Activated CD4-positive, alpha-beta T cell treated with anti-CD3 and anti-CD28 coated beads, Interleukin-2, amount 10 ng/mL, durations not matched to agents 24 days and 14 days (primary cell): ENCODE measurements at regions of chr16 and their contacts with region 1.

Region 1: GRCh38 chr16:53503270-53503923 is 388 bp upstream of the AKTIP start:
- DNase-seq: peak; percentile 100
- H3K4me3 Mint-ChIP-seq: peak overlapping the region; percentile 94
- H3K27ac Mint-ChIP-seq: peak overlapping the region; percentile 94
- H3K4me1 Mint-ChIP-seq: peaks cover 39% of the 10 kb centered on the region
- H3K27me3 Mint-ChIP-seq: no peaks in the 10 kb centered on the region

Region 2: GRCh38 chr16:53130159-53131049 is 373.0 kb before region 1 on chr16:
- intact Hi-C with region 1: loop called (anchors 1 kb)
- DNase-seq: peak; percentile 98
- H3K4me3 Mint-ChIP-seq: peak overlapping the region; percentile 86
- H3K27ac Mint-ChIP-seq: peak overlapping the region; percentile 77
- H3K4me1 Mint-ChIP-seq: peaks cover 8% of the 10 kb centered on the region
- H3K27me3 Mint-ChIP-seq: no peaks in the 10 kb centered on the region

Region 3: DNA sequence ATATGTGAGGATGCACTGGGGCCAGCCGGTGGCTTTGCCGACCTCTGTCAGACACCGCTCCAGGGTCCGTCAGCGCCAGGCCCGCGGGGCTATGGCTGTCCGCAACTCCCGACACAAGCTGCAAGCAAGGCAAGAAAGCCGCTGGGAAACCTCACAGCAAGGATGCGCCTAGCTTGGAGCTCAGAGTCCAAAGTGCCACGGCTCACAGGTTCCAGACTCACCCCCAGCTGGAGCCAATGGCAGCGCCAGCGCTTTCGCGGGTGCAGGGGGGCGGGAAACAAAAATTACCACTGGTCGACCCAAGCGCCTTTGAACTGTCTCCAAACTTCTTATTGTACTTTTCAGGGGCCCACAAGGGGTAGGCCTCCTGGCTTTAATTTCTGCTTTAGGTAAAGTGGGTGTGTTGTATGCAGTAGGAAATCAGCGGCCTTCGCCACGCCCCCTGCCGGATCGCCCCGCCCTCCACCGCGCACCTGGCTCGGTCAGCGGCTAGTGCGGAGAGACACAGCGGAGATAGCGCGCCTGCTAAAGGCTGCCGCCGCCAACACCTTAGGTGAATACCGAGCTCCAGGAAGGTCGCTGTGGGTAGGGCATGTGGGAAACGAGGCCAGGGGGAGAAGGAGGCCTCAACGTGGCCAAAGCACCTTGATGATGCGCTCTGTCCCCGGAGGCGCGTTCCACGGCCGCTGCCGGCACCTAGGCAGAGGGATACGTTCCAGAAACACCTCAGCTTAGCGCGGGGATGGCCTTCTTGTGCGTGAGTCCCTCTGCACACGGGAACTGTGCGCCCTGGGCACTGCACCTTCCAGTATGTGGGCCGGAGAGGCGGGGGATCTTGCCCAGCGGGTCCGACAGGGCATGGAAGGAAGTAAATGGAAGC is 130.2 kb before region 1 on chr16:
- intact Hi-C with region 1: loop called (anchors 5 kb)
- DNase-seq: peak; percentile 93
- H3K4me3 Mint-ChIP-seq: peak overlapping the region; percentile 84
- H3K27ac Mint-ChIP-seq: no peak overlapping the region
- H3K4me1 Mint-ChIP-seq: peaks cover 11% of the 10 kb centered on the region
- H3K27me3 Mint-ChIP-seq: peaks cover 21% of the 10 kb centered on the region

Region 4: DNA sequence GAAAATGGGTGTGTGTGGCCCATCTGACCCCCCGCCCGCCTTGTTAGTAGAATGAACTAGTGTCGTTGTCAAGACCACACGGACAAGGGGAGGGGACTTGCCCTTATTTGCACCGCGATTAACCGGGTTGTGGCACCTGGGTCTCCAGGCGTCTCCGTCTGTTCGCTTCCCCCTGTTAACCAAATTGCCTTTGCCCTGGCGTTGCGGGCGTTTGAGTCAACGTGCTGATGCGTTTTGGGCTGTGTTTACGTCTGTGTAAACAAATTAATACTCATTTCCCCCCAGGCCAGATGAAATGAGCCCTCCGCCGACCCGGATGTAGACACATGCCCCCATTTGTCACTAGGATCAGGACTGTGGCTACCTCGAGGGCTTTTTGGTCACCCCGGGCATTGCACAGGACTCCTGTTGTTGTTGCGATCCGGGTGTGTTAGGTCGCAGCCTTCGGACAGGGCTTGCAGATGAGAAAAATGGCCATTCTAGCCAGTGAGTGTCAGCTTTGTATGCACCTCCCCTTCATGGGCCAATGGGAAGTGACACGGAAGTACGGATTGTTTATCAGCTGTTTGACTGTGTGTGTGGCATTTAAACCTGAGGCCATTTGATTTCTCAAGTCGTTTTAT is 68.2 kb before region 1 on chr16:
- intact Hi-C with region 1: loop called (anchors 1 kb)
- DNase-seq: peak; percentile 91
- H3K4me3 Mint-ChIP-seq: peak overlapping the region; percentile 96
- H3K27ac Mint-ChIP-seq: peak overlapping the region; percentile 93
- H3K4me1 Mint-ChIP-seq: peaks cover 31% of the 10 kb centered on the region
- H3K27me3 Mint-ChIP-seq: no peaks in the 10 kb centered on the region

Region 5: GRCh38 chr16:53445534-53445933 is 57.9 kb before region 1 on chr16:
- intact Hi-C with region 1: no loop called
- DNase-seq: peak; percentile 48
- H3K4me3 Mint-ChIP-seq: no peak overlapping the region
- H3K27ac Mint-ChIP-seq: peak overlapping the region; percentile 58
- H3K4me1 Mint-ChIP-seq: peaks cover 16% of the 10 kb centered on the region
- H3K27me3 Mint-ChIP-seq: no peaks in the 10 kb centered on the region

Region 6: DNA sequence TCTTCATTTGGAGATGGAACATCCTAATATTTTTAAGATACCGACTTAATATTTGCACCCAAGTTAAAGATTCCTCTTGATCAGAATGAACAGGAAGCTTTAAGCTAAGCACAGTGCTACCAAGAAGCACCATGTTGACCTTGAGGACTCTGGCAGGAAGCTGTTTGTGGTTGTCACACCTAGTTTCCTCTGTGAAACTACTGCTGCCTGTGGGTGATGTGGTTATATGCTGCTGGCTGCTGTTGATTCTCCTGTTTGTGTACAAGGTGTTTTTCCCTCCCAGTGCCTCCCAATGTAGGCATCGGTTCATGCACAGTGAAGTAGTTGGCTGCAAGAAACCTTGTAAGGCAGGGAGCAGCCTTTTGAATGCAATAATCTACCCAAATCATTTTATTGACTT is 45.7 kb before region 1 on chr16:
- intact Hi-C with region 1: loop called (anchors 1 kb)
- DNase-seq: peak; percentile 95
- H3K4me3 Mint-ChIP-seq: peak overlapping the region; percentile 79
- H3K27ac Mint-ChIP-seq: peak overlapping the region; percentile 88
- H3K4me1 Mint-ChIP-seq: peaks cover 73% of the 10 kb centered on the region
- H3K27me3 Mint-ChIP-seq: no peaks in the 10 kb centered on the region

Region 7: GRCh38 chr16:53530046-53530445 is 26.6 kb after region 1 on chr16:
- intact Hi-C with region 1: loop called (anchors 1 kb)
- DNase-seq: no peak
- H3K4me3 Mint-ChIP-seq: no peak overlapping the region
- H3K27ac Mint-ChIP-seq: no peak overlapping the region
- H3K4me1 Mint-ChIP-seq: peaks cover 10% of the 10 kb centered on the region
- H3K27me3 Mint-ChIP-seq: no peaks in the 10 kb centered on the region

Region 8: DNA sequence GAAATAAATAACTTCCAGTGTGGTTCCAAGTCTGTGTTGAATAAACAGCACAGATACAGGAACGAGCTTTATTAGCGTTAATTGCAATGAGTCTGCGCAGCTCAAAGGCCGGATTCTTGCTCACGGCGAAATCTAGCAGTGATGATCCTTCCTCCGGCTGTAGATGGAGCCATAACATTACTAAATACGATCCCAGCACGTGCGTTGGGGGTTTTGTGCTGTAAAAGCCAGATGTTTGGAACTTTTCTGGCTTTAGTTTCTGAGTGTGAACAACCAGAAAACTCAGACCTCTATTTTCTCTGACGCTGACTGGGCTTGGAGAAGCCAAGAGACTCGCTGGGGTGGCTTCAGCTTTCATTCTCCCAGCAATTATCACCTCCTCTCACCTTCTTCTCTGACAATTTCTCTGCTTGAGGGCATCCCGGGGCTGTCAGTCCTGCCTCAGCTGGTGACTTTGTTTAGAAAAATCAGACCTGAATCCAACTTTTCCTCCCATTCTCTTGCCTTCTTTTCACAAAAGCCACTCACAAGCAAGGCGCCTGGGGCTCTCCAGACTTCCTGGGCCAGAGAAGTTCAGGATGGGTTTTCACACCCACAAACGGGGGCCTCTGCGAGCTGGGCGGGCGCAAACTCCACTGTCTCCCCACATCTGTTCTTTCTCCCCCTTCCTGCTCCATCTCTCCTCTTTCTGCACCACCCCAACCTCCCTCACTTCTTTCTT is 46.7 kb after region 1 on chr16:
- intact Hi-C with region 1: no loop called
- DNase-seq: peak; percentile 85
- H3K4me3 Mint-ChIP-seq: no peak overlapping the region
- H3K27ac Mint-ChIP-seq: no peak overlapping the region
- H3K4me1 Mint-ChIP-seq: peaks cover 26% of the 10 kb centered on the region
- H3K27me3 Mint-ChIP-seq: peaks cover 33% of the 10 kb centered on the region

Region 9: GRCh38 chr16:53703590-53704444 is 200.4 kb after region 1 on chr16 and contains the starts of genes FTO and RPGRIP1L:
- intact Hi-C with region 1: loop called (anchors 1 kb)
- DNase-seq: peak; percentile 99
- H3K4me3 Mint-ChIP-seq: peak within 1 kb of the TSS; percentile 93
- H3K27ac Mint-ChIP-seq: peak within 1 kb of the TSS; percentile 92
- H3K4me1 Mint-ChIP-seq: peaks cover 16% of the 10 kb centered on the region
- H3K27me3 Mint-ChIP-seq: no peaks in the 10 kb centered on the region
- total RNA-seq, gene FTO: 60.8 and 61.1 TPM in 2 replicates
- total RNA-seq, gene RPGRIP1L: 9.9 and 10.0 TPM in 2 replicates

Region 10: GRCh38 chr16:53822936-53823529 is 319.6 kb after region 1 on chr16:
- intact Hi-C with region 1: no loop called
- DNase-seq: peak; percentile 69
- H3K4me3 Mint-ChIP-seq: no peak overlapping the region
- H3K27ac Mint-ChIP-seq: no peak overlapping the region
- H3K4me1 Mint-ChIP-seq: peaks cover 8% of the 10 kb centered on the region
- H3K27me3 Mint-ChIP-seq: no peaks in the 10 kb centered on the region